ENCODE measurements at regions of chr5 and their contacts with region 1.

Region 1: GRCh38 chr5:53373451-53374158 is 106.8 kb upstream of the FST start:
- DNase-seq: peak; percentile 91
- H3K4me3 ChIP-seq: no peak overlapping the region
- H3K27ac ChIP-seq: peak overlapping the region; percentile 90
- H3K4me1 ChIP-seq: peaks cover 13% of the 10 kb centered on the region
- H3K27me3 ChIP-seq: no peaks in the 10 kb centered on the region
- CTCF ChIP-seq: no peak
- POLR2A ChIP-seq: peak; percentile 23

Region 2: GRCh38 chr5:53276825-53277224 is 96.8 kb before region 1 on chr5:
- CTCF ChIA-PET with region 1: no interaction called
- POLR2A ChIA-PET with region 1: no interaction called
- dilution Hi-C with region 1: no loop called
- intact Hi-C with region 1: no loop called
- DNase-seq: no peak
- H3K4me3 ChIP-seq: no peak overlapping the region
- H3K27ac ChIP-seq: no peak overlapping the region
- H3K4me1 ChIP-seq: no peaks in the 10 kb centered on the region
- H3K27me3 ChIP-seq: no peaks in the 10 kb centered on the region
- CTCF ChIP-seq: no peak
- POLR2A ChIP-seq: no peak

Region 3: DNA sequence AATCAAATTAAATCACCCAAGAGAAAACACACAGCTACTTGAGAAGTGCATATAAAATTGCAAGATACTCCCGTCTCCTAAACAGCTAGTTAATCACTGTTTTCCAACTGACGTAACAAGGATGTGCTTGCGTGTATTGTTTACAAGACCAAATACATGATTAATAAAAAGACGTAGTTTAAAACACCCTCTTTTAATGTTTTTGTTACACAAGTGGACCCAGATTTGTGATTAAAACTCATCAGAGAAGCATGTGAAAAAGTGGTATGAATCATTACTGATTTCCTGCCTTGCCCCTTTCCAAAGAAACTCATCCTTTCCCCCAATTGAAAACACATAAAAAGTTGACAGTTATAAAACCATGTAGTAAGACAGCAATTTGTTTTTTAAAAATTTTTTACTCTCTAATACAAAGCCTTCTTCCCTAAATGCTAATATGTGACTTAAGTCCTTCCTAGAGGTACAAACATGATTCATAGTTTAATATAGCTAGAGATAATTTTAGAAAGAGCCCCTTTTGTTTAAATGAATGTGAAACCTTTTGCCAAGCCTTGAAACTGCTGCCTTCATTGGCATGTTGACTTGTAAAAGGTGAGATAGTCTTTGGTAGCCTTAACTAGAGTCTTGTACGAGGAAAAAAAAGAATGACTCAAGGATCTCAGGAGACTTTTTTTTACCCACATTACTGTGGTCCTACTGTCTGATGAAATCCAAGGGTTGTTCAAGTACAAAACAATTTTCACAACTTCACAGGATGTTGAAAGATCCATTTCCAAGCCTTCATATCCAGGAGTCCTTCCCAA is 45.4 kb after region 1 on chr5:
- CTCF ChIA-PET with region 1: no interaction called
- POLR2A ChIA-PET with region 1: no interaction called
- dilution Hi-C with region 1: no loop called
- intact Hi-C with region 1: loop called (anchors 1 kb)
- DNase-seq: peak; percentile 88
- H3K4me3 ChIP-seq: peak overlapping the region in 1 of 3 experiments; percentile 23
- H3K27ac ChIP-seq: peak overlapping the region; percentile 79
- H3K4me1 ChIP-seq: peaks cover 18% of the 10 kb centered on the region
- H3K27me3 ChIP-seq: no peaks in the 10 kb centered on the region
- CTCF ChIP-seq: no peak
- POLR2A ChIP-seq: no peak

Measured in endothelial cell of umbilical vein (primary cell).